A673 (cell line): ENCODE measurements at regions of chr11 and their contacts with region 1.

Region 1: GRCh38 chr11:59171508-59172322 is at the start of gene DTX4:
- DNase-seq: peak; percentile 95
- H3K4me3 ChIP-seq: peak within 1 kb of the TSS; percentile 50
- H3K27ac ChIP-seq: peak within 1 kb of the TSS; percentile 47
- H3K4me1 ChIP-seq: peaks cover 22% of the 10 kb centered on the region
- H3K27me3 ChIP-seq: peaks cover 7% of the 10 kb centered on the region
- CTCF ChIP-seq: peak; percentile 90
- total RNA-seq, gene DTX4: 1.9 and 2.0 TPM in 2 replicates

Region 2: GRCh38 chr11:59186130-59186594 is 14.4 kb after region 1 on chr11:
- CTCF ChIA-PET with region 1: interaction called, 35 read pairs
- POLR2A ChIA-PET with region 1: no interaction called
- intact Hi-C with region 1: loop called (anchors 2 kb)
- DNase-seq: peak; percentile 66
- H3K4me3 ChIP-seq: no peak overlapping the region
- H3K27ac ChIP-seq: no peak overlapping the region
- H3K4me1 ChIP-seq: no peaks in the 10 kb centered on the region
- H3K27me3 ChIP-seq: no peaks in the 10 kb centered on the region
- CTCF ChIP-seq: peak; percentile 91

Region 3: GRCh38 chr11:59207988-59208451 is 36.3 kb after region 1 on chr11:
- CTCF ChIA-PET with region 1: interaction called, 13 read pairs
- POLR2A ChIA-PET with region 1: no interaction called
- intact Hi-C with region 1: loop called (anchors 1 kb)
- DNase-seq: peak; percentile 67
- H3K4me3 ChIP-seq: no peak overlapping the region
- H3K27ac ChIP-seq: no peak overlapping the region
- H3K4me1 ChIP-seq: no peaks in the 10 kb centered on the region
- H3K27me3 ChIP-seq: no peaks in the 10 kb centered on the region
- CTCF ChIP-seq: peak; percentile 83

Region 4: DNA sequence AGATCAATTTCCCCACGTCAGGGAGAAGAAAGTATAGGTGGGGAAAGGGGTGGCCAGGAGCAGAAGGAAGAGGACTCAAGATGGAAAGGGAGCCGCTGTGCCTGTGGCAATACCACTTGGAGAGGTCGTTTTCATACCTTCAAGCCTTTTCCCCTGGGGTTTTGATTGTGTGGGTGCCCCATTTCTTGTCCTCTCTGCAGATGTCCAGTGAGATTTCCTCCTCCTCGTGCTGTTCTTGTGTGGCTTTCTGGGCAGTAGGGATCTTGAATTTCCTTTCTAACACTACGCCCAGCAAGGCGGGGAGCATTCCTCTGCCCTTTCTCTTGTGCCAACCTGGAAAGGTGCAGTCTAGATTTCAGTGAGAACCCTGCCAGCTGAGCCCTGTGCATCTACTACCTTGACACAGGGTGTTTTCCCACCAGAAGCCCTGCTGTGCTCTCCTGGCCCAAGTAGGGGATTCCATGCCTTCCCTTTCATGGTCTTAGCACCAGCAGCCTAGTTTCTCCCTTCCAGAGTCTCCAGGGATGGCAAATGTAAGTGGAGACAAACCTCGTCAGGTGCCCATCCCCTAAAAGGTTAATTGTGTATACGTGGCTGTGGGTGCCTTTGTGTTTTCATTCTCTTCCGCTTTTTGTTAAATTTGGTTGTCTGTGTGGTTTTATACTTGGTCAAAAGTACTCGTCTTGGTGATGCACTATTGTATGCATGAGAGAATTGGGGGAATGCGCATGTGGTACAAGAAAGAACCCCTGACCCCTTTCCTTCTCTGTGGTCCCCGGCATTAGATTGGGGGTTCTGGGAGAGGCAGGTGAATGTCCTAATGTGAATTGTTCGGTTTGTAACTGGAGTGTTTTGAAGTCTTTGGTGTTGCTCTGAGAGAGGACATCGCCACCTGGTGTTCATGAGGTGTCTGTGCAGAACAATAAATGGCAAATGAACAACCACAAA is 112.4 kb after region 1 on chr11:
- CTCF ChIA-PET with region 1: no interaction called
- POLR2A ChIA-PET with region 1: no interaction called
- intact Hi-C with region 1: loop called (anchors 1 kb)
- DNase-seq: peak; percentile 56
- H3K4me3 ChIP-seq: no peak overlapping the region
- H3K27ac ChIP-seq: no peak overlapping the region
- H3K4me1 ChIP-seq: no peaks in the 10 kb centered on the region
- H3K27me3 ChIP-seq: peaks cover 7% of the 10 kb centered on the region
- CTCF ChIP-seq: peak; percentile 89

Region 5: GRCh38 chr11:59429924-59430516 is 258.3 kb after region 1 on chr11:
- CTCF ChIA-PET with region 1: interaction called, 11 read pairs
- POLR2A ChIA-PET with region 1: no interaction called
- intact Hi-C with region 1: loop called (anchors 1 kb)
- DNase-seq: peak; percentile 79
- H3K4me3 ChIP-seq: no peak overlapping the region
- H3K27ac ChIP-seq: no peak overlapping the region
- H3K4me1 ChIP-seq: peaks cover 16% of the 10 kb centered on the region
- H3K27me3 ChIP-seq: no peaks in the 10 kb centered on the region
- CTCF ChIP-seq: peak; percentile 92

Region 6: DNA sequence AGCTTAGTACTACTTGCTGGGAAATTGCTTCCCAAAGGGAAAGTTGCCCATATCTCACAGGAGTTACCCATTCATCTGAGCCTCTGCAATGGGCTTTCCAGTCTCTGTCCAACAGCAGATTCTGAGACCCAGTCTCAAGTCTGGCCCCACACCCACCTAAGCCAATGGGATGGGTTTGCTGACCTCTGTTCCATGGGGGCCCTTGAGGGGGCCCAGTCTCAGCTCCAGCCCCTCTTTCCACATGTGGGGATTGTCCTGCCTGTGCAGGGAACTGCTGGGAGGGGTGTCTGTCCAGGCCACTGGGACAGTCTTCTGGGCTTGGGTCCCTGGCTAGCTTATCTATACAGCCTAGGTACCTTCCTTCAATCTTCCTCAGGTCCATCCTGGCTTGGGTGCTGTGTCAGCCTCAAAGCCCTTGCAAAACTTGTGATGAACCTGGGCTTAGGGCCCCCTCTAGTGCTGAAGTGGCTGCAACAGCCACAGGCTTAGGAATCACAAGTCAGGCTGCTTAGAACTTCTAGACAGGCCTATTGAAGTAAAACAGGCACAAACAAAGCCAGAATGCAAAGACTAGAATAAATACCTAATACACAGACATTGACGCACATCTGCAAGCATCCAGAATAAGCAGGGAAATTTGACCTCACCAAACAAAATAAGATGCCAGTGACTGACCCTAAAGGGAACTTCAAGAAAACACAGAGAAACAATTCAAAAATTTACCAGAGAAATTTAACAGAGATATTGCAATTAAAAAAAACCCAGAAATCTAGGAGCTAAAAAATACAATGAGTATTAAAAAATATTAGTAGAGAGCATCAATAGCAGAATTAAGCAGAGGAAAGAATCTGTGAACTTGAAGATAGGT is 508.8 kb after region 1 on chr11:
- CTCF ChIA-PET with region 1: interaction called, 5 read pairs
- POLR2A ChIA-PET with region 1: no interaction called
- intact Hi-C with region 1: loop called (anchors 1 kb)
- DNase-seq: peak; percentile 90
- H3K4me3 ChIP-seq: no peak overlapping the region
- H3K27ac ChIP-seq: no peak overlapping the region
- H3K4me1 ChIP-seq: peaks cover 13% of the 10 kb centered on the region
- H3K27me3 ChIP-seq: no peaks in the 10 kb centered on the region
- CTCF ChIP-seq: peak; percentile 98